Astrocyte of the cerebellum (primary cell): ENCODE measurements at regions of chr3 and their contacts with region 1.

Region 1: DNA sequence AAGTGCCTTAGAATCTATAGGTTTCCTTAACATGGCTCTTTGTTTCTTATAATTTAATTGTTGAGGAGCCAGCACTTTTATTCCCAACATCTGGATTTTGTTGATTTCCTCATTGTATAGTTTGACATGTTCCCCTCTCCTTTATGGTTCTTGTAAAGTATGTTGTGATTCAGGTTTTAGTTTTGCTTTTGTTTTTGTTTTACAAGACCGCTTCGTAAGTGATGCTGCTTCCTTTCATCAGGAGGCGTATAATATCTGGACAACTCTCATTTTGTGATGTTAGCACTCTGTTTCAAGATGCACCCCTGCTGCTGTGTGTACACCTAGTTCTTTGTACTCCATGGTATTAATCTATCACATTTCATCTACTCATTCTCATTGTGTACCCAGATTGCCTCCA is 48.7 kb downstream of the SLC49A4 start:
- DNase-seq: no peak
- H3K4me3 ChIP-seq: no peak overlapping the region
- CTCF ChIP-seq: no peak

Region 2: GRCh38 chr3:122880624-122881023 is 37.0 kb after region 1 on chr3:
- in situ Hi-C with region 1: loop called (anchors 5 kb)
- DNase-seq: no peak
- H3K4me3 ChIP-seq: no peak overlapping the region
- CTCF ChIP-seq: no peak